Mucosa of descending colon (tissue), 3 donors: ENCODE measurements at regions of chr10 and their contacts with region 1.

Region 1: GRCh38 chr10:38094158-38094920 is at the start of gene ZNF37A:
- DNase-seq: peak; percentile 94 to 98 (median 94)
- ATAC-seq: peak; percentile 99
- H3K4me3 ChIP-seq: peak within 1 kb of the TSS; percentile 55
- H3K4me1 ChIP-seq: peaks cover 2% of the 10 kb centered on the region
- CTCF ChIP-seq: no peak
- total RNA-seq, gene ZNF37A: 9.8 to 19.7 (median 13.2) TPM

Region 2: DNA sequence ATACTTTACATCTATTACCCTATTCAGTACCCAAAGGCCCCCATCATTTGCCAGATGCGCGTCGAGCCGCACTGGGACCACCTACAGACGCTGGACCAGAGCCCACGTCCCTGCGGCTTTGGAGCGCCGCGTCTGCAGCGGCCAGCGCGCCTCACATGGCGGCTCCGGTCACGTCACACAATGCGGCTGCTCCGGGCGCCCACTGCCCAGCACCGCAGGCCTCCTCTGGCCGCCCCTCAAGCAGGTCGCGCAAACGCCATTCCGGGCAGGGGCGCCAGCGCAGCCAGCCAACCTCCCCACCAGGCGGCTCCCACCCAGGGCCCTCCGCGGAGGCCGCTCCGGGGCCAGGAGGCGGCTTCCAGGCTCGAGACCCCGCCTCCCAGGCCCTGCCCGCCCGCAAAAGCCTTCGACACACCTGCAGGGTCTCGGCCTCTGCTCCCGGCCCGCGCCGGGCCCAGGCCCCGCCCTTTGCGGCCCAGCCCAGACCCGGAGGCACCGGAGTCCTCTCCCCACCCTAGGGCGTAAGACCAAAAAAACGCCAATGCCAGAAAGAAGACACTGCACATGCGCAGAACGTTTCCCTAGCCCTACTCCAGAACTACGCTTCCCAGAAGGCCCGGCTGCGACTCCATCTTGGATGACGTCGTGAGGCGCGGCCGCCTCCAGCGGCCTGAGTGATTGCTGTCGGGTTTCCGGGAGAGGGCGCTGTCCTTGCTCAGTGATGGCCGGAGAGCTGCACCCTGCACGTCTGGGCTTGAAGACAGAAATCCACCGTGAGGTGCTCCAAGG is 118.1 kb before region 1 on chr10 and contains the start of gene ZNF25:
- intact Hi-C with region 1: loop called in 1 of 2 experiments (anchors 10 kb)
- DNase-seq: peak; percentile 98 to 99 (median 98)
- ATAC-seq: peak; percentile 97
- H3K4me3 ChIP-seq: peak within 1 kb of the TSS; percentile 84
- H3K4me1 ChIP-seq: peaks cover 8% of the 10 kb centered on the region
- CTCF ChIP-seq: peak; percentile 85
- total RNA-seq, gene ZNF25: 3.9 to 16.0 (median 4.0) TPM

Region 3: DNA sequence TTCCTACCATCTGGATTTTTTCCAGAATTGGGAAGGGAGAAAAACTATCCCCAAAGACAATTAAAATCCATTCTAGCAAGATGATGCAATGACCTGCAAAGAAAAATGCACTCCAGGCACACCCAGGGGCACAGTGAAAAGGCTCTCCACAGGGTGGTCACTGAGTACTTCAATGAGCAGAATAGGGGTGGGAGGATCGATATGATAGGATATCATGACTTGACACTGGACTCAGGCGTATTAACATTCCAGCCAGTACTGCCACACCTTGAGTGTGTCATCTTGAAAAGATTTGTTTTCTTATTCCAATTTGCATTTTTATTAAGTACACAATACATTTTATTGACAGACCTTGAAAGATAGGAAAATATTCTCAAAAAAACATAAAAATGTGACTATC is 132.0 kb after region 1 on chr10:
- intact Hi-C with region 1: no loop called
- DNase-seq: no peak
- ATAC-seq: no peak
- H3K4me3 ChIP-seq: no peak overlapping the region
- H3K4me1 ChIP-seq: no peaks in the 10 kb centered on the region
- CTCF ChIP-seq: no peak